Psoas muscle (tissue), 8 donors: ENCODE measurements at regions of chr2 and their contacts with region 1.

Region 1: GRCh38 chr2:55718165-55719008 is 24.7 kb upstream of the PNPT1 start:
- DNase-seq: no peak
- ATAC-seq: peak in 1 of 4 donors; percentile 68
- H3K4me3 ChIP-seq: no peak overlapping the region
- H3K27ac ChIP-seq: no peak overlapping the region
- H3K4me1 ChIP-seq: no peaks in the 10 kb centered on the region
- H3K27me3 ChIP-seq: no peaks in the 10 kb centered on the region
- CTCF ChIP-seq: peak; percentile 79

Region 2: DNA sequence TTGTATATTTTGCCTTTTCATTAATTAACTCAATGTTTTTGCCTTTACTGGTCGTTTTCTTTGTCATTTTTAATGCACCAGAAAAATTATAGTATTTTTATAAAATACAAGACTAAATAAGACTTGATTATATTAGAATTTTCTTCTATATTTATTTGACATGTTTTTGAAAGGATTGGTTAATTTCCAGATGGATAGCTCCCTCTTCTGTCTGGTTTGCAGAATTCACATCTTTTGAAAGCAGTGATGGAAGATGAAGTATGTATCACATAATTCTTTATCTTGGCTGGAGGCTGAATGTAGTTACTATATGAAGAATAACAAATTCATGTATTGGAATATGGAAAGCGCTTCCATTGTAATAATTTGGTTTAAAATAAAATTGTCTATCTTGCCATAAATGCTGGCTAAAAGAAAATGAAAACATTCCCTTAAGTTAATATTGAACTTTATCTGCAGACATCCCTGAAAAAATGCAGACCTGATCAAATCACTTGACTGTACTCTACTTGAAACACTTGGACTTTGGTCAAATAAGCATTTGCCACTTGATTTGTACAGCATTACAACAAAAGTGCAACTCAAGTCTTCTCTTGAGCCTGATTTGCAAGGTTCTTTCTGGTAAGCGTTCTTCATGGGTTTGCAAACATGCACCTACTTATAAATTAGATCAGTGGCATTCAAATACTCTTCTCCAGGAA is 291.5 kb after region 1 on chr2:
- intact Hi-C with region 1: loop called in 1 of 2 experiments (anchors 2 kb)
- DNase-seq: no peak
- ATAC-seq: no peak
- H3K4me3 ChIP-seq: no peak overlapping the region
- H3K27ac ChIP-seq: no peak overlapping the region
- H3K4me1 ChIP-seq: no peaks in the 10 kb centered on the region
- H3K27me3 ChIP-seq: no peaks in the 10 kb centered on the region
- CTCF ChIP-seq: peak; percentile 38

Region 3: GRCh38 chr2:56132138-56132537 is 413.8 kb after region 1 on chr2:
- intact Hi-C with region 1: loop called (anchors 2 to 5 kb)
- DNase-seq: no peak
- ATAC-seq: no peak
- H3K4me3 ChIP-seq: no peak overlapping the region
- H3K27ac ChIP-seq: no peak overlapping the region
- H3K4me1 ChIP-seq: no peaks in the 10 kb centered on the region
- H3K27me3 ChIP-seq: no peaks in the 10 kb centered on the region
- CTCF ChIP-seq: peak; percentile 36

Region 4: DNA sequence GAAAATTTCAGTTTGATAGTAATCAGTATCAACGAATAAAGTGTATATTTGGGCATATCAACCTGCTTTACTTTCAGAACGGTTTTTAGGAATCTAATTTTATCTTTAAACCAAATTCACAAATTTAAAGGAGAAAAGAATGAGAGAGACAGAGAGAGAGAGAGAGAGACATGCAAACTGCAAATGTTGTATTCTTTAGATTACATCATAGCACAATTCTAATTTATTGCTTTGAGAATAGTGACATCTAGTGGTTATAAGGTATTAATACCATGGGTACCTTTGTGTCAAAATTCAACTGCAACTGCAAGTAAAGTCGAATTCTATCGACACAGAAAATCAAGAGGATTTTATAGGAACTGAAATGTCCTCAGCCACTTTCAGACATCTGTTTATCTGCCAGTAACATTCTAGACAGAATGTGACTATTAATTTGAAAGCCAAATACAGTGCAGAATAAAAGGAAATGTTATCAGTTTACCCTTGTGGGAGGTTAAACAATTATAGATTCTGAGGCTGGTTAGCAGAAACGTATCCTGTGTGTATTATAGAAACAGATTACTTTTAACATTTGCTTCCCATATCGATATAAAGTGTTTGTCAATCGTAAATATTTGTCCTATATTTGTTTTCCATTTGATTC is 1798.4 kb after region 1 on chr2:
- intact Hi-C with region 1: loop called (anchors 5 kb)
- DNase-seq: no peak
- ATAC-seq: peak in 3 of 4 donors; percentile 61 to 74 (median 69)
- H3K4me3 ChIP-seq: no peak overlapping the region
- H3K27ac ChIP-seq: no peak overlapping the region
- H3K4me1 ChIP-seq: no peaks in the 10 kb centered on the region
- H3K27me3 ChIP-seq: no peaks in the 10 kb centered on the region
- CTCF ChIP-seq: peak; percentile 60